Panc1 (cell line): ENCODE measurements at regions of chr12 and their contacts with region 1.

Region 1: DNA sequence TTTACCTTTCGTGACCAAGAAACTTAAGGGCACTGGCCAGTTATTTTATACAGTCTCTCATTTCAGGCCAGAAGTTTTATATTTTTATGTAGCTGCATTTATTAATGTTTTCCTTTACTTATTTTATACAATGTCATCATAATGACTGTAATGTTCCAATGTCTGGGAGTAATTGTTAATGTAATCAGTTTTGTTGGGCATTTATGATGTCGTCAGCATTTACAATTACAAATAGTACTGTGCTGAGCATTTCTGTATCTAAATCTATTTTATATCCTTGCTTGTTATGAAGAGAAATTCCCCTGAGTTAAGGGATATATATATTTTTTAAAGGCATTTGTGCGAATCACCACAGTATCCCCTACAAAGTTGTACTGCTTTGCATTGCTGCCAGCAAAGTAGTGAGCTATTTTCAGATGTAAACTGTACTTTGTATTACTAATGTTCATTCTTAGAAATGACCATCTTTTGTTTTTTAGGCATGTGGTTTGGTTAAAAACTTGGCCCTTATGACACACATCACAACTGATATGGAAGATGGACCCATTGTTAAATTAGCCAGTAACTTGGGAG is 74.4 kb downstream of the POLR3B start:
- DNase-seq: no peak
- ATAC-seq: no peak
- H3K4me3 ChIP-seq: no peak overlapping the region
- H3K27ac ChIP-seq: no peak overlapping the region
- H3K4me1 ChIP-seq: no peaks in the 10 kb centered on the region
- H3K27me3 ChIP-seq: no peaks in the 10 kb centered on the region
- CTCF ChIP-seq: no peak

Region 2: GRCh38 chr12:106078358-106079010 is 353.4 kb before region 1 on chr12:
- CTCF ChIA-PET with region 1: no interaction called
- POLR2A ChIA-PET with region 1: no interaction called
- in situ Hi-C with region 1: no loop called
- intact Hi-C with region 1: no loop called
- DNase-seq: no peak
- ATAC-seq: peak; percentile 81
- H3K4me3 ChIP-seq: no peak overlapping the region
- H3K27ac ChIP-seq: peak overlapping the region; percentile 60; the same call in 1 of the 2 replicates
- H3K4me1 ChIP-seq: peaks cover 56% of the 10 kb centered on the region
- H3K27me3 ChIP-seq: no peaks in the 10 kb centered on the region
- CTCF ChIP-seq: no peak

Region 3: GRCh38 chr12:106090591-106091411 is 341.1 kb before region 1 on chr12:
- CTCF ChIA-PET with region 1: no interaction called
- POLR2A ChIA-PET with region 1: no interaction called
- in situ Hi-C with region 1: no loop called
- intact Hi-C with region 1: no loop called
- DNase-seq: no peak
- ATAC-seq: peak; percentile 13; the same call in 1 of the 2 replicates
- H3K4me3 ChIP-seq: no peak overlapping the region
- H3K27ac ChIP-seq: peak overlapping the region; percentile 36
- H3K4me1 ChIP-seq: peaks cover 26% of the 10 kb centered on the region
- H3K27me3 ChIP-seq: no peaks in the 10 kb centered on the region
- CTCF ChIP-seq: no peak

Region 4: DNA sequence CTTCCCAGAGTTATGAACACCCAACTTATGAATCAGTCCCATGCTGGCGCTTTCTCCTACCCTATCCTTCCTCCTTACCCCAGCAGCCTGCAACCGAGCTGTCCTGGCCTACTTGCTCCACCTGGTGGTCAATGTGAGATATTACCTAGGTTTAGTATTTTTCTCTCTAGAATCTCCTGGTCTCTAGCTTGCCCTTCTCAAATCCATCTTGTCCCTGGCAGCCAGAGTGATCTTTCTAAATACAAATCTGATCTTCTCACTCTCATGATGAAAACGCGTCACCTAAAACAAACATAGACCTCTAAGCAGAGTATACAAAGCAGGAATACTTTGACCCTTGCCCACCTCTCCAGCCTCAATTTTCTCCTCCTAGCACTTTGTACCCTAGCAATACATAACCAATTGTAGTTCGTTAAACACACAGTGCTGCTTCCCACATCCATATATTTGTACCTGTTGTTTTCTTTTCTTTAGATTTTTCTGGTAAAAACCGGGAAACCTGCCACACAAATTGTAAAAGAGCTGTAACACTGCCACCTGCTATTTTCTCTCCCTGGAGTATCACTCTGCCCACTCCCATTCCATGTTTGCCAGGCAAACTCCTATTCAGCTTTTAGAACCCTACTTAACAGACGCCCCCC is 149.3 kb before region 1 on chr12:
- CTCF ChIA-PET with region 1: no interaction called
- POLR2A ChIA-PET with region 1: no interaction called
- in situ Hi-C with region 1: no loop called
- intact Hi-C with region 1: no loop called
- DNase-seq: no peak
- ATAC-seq: peak; percentile 81; the same call in 1 of the 2 replicates
- H3K4me3 ChIP-seq: no peak overlapping the region
- H3K27ac ChIP-seq: no peak overlapping the region
- H3K4me1 ChIP-seq: no peaks in the 10 kb centered on the region
- H3K27me3 ChIP-seq: no peaks in the 10 kb centered on the region
- CTCF ChIP-seq: peak; percentile 78

Region 5: GRCh38 chr12:106345739-106346138 is 86.2 kb before region 1 on chr12:
- CTCF ChIA-PET with region 1: no interaction called
- POLR2A ChIA-PET with region 1: no interaction called
- in situ Hi-C with region 1: no loop called
- intact Hi-C with region 1: no loop called
- DNase-seq: peak; percentile 32
- ATAC-seq: peak; percentile 99
- H3K4me3 ChIP-seq: no peak overlapping the region
- H3K27ac ChIP-seq: no peak overlapping the region
- H3K4me1 ChIP-seq: peaks cover 3% of the 10 kb centered on the region; the same call in 1 of the 2 replicates
- H3K27me3 ChIP-seq: no peaks in the 10 kb centered on the region
- CTCF ChIP-seq: peak; percentile 80

Region 6: DNA sequence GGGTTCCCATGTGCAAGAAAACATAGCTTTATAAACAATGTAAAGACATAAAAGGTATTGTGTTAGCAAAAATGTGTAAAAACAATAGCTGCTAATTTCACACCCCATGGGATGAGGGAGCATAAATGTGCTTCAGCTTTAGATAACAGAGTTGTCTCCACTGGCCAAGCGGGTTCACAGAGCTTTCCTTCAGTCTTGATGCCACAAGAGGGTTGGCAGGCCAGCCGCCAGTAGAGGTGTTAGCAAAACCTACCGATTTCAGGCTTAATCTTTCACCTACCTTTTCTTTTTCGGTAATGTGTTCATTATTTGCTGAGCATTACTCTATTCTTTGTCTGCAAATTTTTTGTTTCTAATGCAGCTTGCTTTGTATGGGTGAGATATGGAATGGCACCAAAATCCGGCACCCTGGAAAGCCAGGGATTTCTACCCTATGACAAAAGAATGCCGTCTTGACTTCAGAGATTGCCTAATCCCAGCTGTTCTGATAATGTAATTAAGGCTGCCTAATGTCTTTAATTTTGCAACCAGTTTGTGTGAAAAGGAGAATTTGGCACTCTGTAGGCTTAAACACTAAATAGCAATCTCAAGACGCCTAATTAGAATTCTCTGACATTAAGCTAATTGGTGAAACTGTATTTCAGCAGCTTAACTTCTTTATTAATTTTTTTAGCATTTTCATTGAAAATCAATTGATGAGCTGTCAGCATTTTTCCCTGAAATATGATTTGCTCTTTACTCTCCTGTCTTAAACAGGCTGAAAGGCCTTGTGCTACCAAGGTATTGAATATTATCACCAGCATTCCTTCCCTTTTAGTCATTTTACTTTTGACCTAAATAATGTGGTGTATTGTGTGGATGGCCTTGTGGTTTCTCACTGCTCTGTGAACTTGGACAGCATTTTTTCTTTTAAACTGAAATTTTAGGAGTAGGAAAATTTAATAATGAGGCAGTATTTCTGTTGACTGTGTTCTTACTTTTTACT is 13.7 kb before region 1 on chr12:
- CTCF ChIA-PET with region 1: no interaction called
- POLR2A ChIA-PET with region 1: interaction called, 12 read pairs
- in situ Hi-C with region 1: no loop called
- intact Hi-C with region 1: no loop called
- DNase-seq: no peak
- ATAC-seq: 0 out of 2 replicates have a peak, but pooled peaks have one; percentile 65
- H3K4me3 ChIP-seq: no peak overlapping the region
- H3K27ac ChIP-seq: no peak overlapping the region
- H3K4me1 ChIP-seq: no peaks in the 10 kb centered on the region
- H3K27me3 ChIP-seq: no peaks in the 10 kb centered on the region
- CTCF ChIP-seq: no peak